Endothelial cell of umbilical vein (primary cell): ENCODE measurements at regions of chr7 and their contacts with region 1.

Region 1: DNA sequence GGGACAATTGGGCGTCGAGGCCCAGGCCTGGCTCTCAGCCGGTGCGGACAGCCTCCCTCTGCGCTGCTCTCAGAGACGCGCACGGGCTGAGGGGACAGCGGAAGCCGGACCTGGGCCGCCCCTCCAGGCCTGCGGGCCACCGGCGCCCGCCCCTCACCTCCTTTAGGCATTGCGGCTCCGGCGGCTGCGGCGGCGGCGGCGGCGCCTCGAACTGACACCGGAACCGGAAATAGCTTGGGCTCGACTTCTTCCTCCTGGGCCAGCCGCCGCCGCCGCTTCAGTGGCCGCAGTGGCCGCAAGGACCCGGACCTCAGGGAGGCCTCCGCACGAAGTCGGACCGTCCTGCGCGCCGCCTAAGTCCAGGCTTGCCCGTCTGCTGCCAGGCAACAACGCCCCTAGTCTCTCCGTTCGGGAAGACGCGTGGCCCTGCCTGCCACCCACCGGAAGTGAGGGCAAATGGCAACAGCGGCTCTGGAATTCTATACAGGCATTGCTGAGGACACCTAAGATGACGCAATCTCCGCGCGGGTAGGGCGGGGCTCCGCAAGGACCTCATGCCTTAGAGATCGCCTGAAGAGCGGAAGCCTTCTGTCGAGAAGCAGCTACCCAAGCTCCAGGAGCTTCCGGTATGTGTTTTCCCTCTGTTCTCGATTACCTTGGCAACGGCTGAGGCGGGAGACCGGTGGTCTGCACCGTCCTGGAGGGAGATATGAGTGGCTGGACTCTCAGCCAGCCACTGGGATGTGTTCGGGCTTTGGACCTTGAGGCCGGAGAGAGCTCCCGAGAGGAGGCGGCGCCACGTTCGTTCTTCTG is at the starts of genes BUD31 and PDAP1:
- DNase-seq: peak; percentile 98
- H3K4me3 ChIP-seq: peak within 1 kb of the TSS; percentile 65 to 99 (median 96)
- H3K27ac ChIP-seq: peak within 1 kb of the TSS; percentile 79
- H3K4me1 ChIP-seq: peaks cover 21% of the 10 kb centered on the region
- H3K27me3 ChIP-seq: no peaks in the 10 kb centered on the region
- CTCF ChIP-seq: no peak
- POLR2A ChIP-seq: peak; percentile 91
- total RNA-seq, gene BUD31: 113 and 122 TPM in 2 replicates
- total RNA-seq, gene PDAP1: 148 and 150 TPM in 2 replicates

Region 2: DNA sequence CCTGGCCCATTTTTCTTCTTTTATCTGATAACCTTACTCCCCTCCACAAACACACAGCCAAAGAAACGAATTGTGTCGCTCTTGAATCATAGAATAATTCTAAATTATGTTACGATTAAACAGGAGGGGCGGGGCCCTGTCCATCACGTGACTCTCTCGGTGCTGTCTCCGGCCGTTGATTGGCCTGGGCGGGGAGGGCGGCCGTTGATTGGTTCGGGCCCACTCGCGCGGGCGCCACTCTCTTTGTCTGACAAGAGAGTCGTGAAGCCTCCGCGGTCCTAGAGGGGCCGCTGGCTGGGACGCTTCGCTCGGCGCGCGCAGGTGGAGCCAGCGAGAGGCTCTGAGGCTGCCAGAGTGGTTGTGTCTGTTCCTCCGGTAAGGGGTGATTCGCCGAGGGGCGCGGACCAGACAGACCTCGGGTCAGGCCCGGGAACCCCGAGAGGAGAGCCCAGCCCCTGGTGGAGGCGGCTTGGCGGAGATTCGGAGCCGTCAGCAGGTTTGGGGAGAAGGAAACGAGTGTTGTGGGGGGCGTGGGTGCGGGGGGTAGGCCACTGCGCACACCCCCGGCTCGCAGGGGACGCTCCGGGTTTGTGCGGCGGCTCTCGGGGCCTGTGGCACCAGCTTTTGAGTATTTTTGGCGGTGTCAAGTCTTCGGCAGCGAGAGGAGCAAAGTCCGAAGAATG is 64.1 kb after region 1 on chr7 and contains the start of gene ZNF789:
- CTCF ChIA-PET with region 1: no interaction called
- POLR2A ChIA-PET with region 1: interaction called, 4 read pairs
- dilution Hi-C with region 1: no loop called
- intact Hi-C with region 1: loop called (anchors 1 kb)
- DNase-seq: peak; percentile 96
- H3K4me3 ChIP-seq: peak within 1 kb of the TSS; percentile 79 to 93 (median 87)
- H3K27ac ChIP-seq: peak within 1 kb of the TSS; percentile 80
- H3K4me1 ChIP-seq: peaks cover 5% of the 10 kb centered on the region
- H3K27me3 ChIP-seq: no peaks in the 10 kb centered on the region
- CTCF ChIP-seq: no peak
- POLR2A ChIP-seq: no peak
- total RNA-seq, gene ZNF789: 16.6 and 21.6 TPM in 2 replicates